GM10248 (cell line): ENCODE measurements at regions of chr18 and their contacts with region 1.

Region 1: GRCh38 chr18:62346333-62347090 is 21.4 kb downstream of the TNFRSF11A start:
- DNase-seq: no peak
- CTCF ChIP-seq: no peak

Region 2: GRCh38 chr18:62323483-62324180 is 22.9 kb before region 1 on chr18:
- CTCF ChIA-PET with region 1: no interaction called
- POLR2A ChIA-PET with region 1: no interaction called
- DNase-seq: no peak
- CTCF ChIP-seq: no peak

Region 3: GRCh38 chr18:62334120-62334519 is 12.4 kb before region 1 on chr18:
- CTCF ChIA-PET with region 1: interaction called, 13 read pairs
- POLR2A ChIA-PET with region 1: no interaction called
- DNase-seq: no peak
- CTCF ChIP-seq: no peak

Region 4: GRCh38 chr18:62357079-62357719 is 10.7 kb after region 1 on chr18:
- CTCF ChIA-PET with region 1: no interaction called
- POLR2A ChIA-PET with region 1: no interaction called
- DNase-seq: no peak
- CTCF ChIP-seq: no peak